Activated naive CD4-positive, alpha-beta T cell treated with anti-CD3 and anti-CD28 coated beads, Interleukin-2, amount 10 ng/mL, durations not matched to agents 7 days and 5 days (primary cell): ENCODE measurements at regions of chr6 and their contacts with region 1.

Region 1: GRCh38 chr6:158803733-158804143 is 15.4 kb downstream of the EZR start:
- DNase-seq: peak; percentile 72
- H3K4me3 Mint-ChIP-seq: peak overlapping the region; percentile 60
- H3K27ac Mint-ChIP-seq: peak overlapping the region; percentile 84
- H3K4me1 Mint-ChIP-seq: peaks cover 87% of the 10 kb centered on the region
- H3K27me3 Mint-ChIP-seq: no peaks in the 10 kb centered on the region

Region 2: DNA sequence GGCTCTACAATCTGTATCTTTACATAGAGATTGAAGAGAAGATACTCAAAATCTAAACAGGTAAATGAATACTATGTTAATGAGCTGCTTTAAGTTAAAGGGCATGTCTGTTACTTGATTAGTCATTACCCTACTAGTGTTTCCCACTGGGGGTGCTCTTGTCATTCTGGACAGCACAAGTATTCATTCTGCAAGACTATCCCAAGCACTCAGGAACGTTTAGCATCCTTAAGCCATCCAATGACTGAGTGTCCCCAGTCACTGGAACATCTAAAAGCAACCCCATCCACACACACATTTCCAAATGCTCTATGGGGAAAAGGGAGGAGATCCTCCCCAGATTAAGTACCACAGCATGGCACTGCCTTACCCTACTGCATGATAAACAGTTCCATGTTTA is 10.3 kb before region 1 on chr6:
- CTCF ChIA-PET with region 1: interaction called, 10 read pairs
- DNase-seq: no peak
- H3K4me3 Mint-ChIP-seq: no peak overlapping the region
- H3K27ac Mint-ChIP-seq: no peak overlapping the region
- H3K4me1 Mint-ChIP-seq: peaks cover 81% of the 10 kb centered on the region
- H3K27me3 Mint-ChIP-seq: no peaks in the 10 kb centered on the region

Region 3: GRCh38 chr6:159044899-159045727 is 241.4 kb after region 1 on chr6 and contains the start of gene TAGAP:
- CTCF ChIA-PET with region 1: no interaction called
- DNase-seq: peak; percentile 93
- H3K4me3 Mint-ChIP-seq: peak within 1 kb of the TSS; percentile 96
- H3K27ac Mint-ChIP-seq: peak within 1 kb of the TSS; percentile 98
- H3K4me1 Mint-ChIP-seq: peaks cover 57% of the 10 kb centered on the region
- H3K27me3 Mint-ChIP-seq: no peaks in the 10 kb centered on the region